BJ (cell line): ENCODE measurements at regions of chr18 and their contacts with region 1.

Region 1: GRCh38 chr18:67217551-67218166 is 298.9 kb downstream of the DSEL start:
- DNase-seq: peak; percentile 10
- H3K4me3 ChIP-seq: no peak overlapping the region
- H3K27me3 ChIP-seq: no peaks in the 10 kb centered on the region
- CTCF ChIP-seq: peak; percentile 64

Region 2: DNA sequence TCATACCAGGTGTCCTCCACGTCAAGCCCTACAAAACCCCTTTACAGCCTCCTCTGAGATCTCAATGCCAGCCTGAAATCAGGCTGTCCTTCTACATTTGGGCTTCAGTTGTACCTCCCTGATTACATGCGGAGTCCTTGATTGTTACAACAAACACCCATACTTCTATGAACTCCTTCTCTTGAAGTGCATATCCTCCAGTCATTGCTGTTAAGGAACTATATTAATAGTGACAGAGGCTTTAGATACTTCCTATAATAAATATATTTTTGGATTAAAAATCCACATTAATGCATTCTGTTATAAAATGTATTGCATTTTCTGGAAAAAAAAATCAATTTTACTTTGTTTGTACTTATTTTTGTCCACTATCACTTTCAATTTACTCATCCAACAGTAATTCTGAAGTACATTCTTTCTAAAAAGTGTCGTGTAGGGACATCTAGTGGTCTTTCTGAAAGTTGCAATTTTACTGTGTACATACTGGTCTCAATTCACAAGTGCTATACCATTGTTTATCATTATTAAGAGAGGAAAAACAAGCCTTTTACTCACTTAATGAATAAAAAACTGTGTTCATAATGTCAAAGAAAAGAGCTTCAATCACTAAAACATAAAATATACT is 17.6 kb before region 1 on chr18:
- CTCF ChIA-PET with region 1: no interaction called
- POLR2A ChIA-PET with region 1: no interaction called
- DNase-seq: peak; percentile 10
- H3K4me3 ChIP-seq: no peak overlapping the region
- H3K27me3 ChIP-seq: no peaks in the 10 kb centered on the region; the same call in 1 of the 2 replicates
- CTCF ChIP-seq: peak; percentile 54

Region 3: GRCh38 chr18:67232406-67232805 is 14.7 kb after region 1 on chr18:
- CTCF ChIA-PET with region 1: no interaction called
- POLR2A ChIA-PET with region 1: no interaction called
- DNase-seq: no peak
- H3K4me3 ChIP-seq: no peak overlapping the region
- H3K27me3 ChIP-seq: no peaks in the 10 kb centered on the region
- CTCF ChIP-seq: no peak

Region 4: DNA sequence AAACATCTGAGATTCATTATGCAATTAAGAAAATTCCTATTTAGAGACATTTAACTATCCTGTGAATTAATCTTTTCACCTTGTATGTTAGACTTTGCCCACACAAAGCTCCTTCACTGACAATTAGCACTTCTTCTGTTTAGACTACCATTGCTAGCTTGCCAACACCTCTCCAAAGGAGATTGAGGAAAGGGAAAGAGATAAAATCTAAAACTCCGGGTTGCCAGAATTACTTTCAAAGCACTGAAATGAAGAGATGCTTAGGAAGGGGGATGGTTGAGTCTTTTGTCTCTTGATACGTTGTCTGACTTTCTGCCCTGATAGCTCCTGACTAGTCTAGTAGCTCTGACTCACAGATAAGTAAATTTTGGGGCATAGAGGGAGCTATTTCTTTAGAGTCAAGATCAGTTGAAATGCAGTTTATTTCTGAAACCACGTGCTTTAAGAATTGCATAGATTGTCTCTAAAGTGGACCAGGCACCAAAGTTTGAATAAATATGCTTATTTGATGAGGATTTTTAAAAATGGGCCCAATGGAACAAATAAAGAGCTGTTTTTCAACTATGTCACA is 373.0 kb after region 1 on chr18:
- CTCF ChIA-PET with region 1: no interaction called
- POLR2A ChIA-PET with region 1: no interaction called
- DNase-seq: no peak
- H3K4me3 ChIP-seq: no peak overlapping the region
- H3K27me3 ChIP-seq: no peaks in the 10 kb centered on the region
- CTCF ChIP-seq: peak; percentile 29

Region 5: GRCh38 chr18:68660354-68661183 is 1442.9 kb after region 1 on chr18:
- CTCF ChIA-PET with region 1: interaction called, 15 read pairs
- POLR2A ChIA-PET with region 1: no interaction called
- DNase-seq: no peak
- H3K4me3 ChIP-seq: no peak overlapping the region
- H3K27me3 ChIP-seq: no peaks in the 10 kb centered on the region
- CTCF ChIP-seq: peak; percentile 52